Activated naive CD4-positive, alpha-beta T cell treated with anti-CD3 and anti-CD28 coated beads for 36 hours (primary cell): ENCODE measurements at regions of chr13 and their contacts with region 1.

Region 1: GRCh38 chr13:45119991-45120864 is at the start of gene GTF2F2:
- DNase-seq: peak; percentile 88
- H3K4me3 Mint-ChIP-seq: no peak within 1 kb of the TSS
- H3K27ac Mint-ChIP-seq: no peak within 1 kb of the TSS
- H3K4me1 Mint-ChIP-seq: peaks cover 9% of the 10 kb centered on the region
- H3K27me3 Mint-ChIP-seq: no peaks in the 10 kb centered on the region
- total RNA-seq, gene GTF2F2: 21.3 to 22.4 TPM

Region 2: DNA sequence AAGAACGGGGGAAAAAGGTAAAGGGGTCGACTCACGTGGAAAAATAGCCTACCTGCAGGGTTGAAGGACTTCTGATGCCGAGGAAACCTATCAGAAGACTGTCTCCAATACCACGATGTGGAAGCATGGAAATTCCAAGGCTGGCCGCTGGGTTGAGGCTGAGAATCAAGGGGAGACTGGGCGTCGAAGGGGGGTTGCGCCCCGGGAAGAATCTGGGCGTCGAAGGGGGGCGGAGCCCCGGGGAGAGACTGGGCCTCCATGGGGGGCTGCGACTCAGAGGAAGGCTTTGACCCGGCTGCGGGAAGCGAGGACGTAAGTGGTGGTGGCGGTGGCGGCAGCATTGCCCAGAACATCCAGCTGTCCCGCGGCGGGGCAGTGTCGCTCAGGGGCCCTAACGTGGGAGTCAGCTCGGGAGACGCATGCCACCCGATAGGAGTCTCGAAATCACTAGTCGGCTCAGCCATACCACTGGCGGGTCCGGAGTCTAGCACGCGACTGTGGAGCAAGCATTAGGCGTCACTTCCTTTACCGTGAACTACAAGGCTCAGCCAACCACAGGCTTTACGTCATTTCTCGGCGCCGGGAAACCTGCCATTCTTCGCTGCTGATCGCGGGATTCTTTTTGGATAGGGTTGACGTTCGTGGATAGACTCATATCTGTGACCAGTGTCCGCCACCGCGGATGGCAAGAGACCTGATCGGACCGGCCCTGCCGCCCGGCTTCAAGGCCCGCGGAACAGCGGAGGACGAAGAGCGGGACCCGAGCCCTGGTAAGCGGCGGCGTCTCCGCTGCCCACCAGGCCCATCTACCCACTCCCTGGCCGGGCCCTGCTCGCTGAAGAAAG is 131.0 kb before region 1 on chr13 and contains the starts of genes GPALPP1 and NUFIP1:
- CTCF ChIA-PET with region 1: no interaction called
- intact Hi-C with region 1: loop called (anchors 1 kb)
- DNase-seq: peak; percentile 98
- H3K4me3 Mint-ChIP-seq: peak within 1 kb of the TSS; percentile 98
- H3K27ac Mint-ChIP-seq: peak within 1 kb of the TSS; percentile 88
- H3K4me1 Mint-ChIP-seq: peaks cover 60% of the 10 kb centered on the region
- H3K27me3 Mint-ChIP-seq: no peaks in the 10 kb centered on the region
- total RNA-seq, gene GPALPP1: 25.0 to 26.9 TPM
- total RNA-seq, gene NUFIP1: 7.2 to 8.9 TPM

Region 3: DNA sequence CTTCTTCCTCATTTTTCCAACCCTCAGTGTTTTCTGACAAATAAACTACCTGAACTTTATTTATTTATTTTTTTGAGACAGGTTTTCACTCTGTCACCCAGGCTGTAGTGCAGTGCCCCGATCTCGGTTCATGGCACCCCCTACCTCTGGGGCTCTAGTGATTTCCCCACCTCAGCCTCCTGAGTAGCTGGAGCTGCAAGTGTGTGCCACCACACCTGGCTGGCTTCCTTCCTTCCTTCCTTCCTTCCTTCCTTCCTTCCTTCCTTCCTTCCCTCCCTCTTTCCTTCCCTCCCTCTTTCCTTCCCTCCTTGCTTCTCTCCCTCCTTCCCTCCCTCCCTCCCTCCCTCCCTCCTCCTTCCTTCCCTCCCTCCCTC is 48.3 kb after region 1 on chr13:
- CTCF ChIA-PET with region 1: no interaction called
- intact Hi-C with region 1: no loop called
- DNase-seq: no peak
- H3K4me3 Mint-ChIP-seq: no peak overlapping the region
- H3K27ac Mint-ChIP-seq: no peak overlapping the region
- H3K4me1 Mint-ChIP-seq: peaks cover 7% of the 10 kb centered on the region
- H3K27me3 Mint-ChIP-seq: no peaks in the 10 kb centered on the region

Region 4: GRCh38 chr13:45206340-45206739 is 86.1 kb after region 1 on chr13:
- CTCF ChIA-PET with region 1: interaction called, 3 read pairs
- intact Hi-C with region 1: loop called (anchors 1 kb)
- DNase-seq: peak; percentile 33
- H3K4me3 Mint-ChIP-seq: no peak overlapping the region
- H3K27ac Mint-ChIP-seq: peak overlapping the region; percentile 37
- H3K4me1 Mint-ChIP-seq: peaks cover 31% of the 10 kb centered on the region
- H3K27me3 Mint-ChIP-seq: no peaks in the 10 kb centered on the region

Region 5: GRCh38 chr13:45297456-45298205 is 177.4 kb after region 1 on chr13:
- CTCF ChIA-PET with region 1: no interaction called
- intact Hi-C with region 1: loop called (anchors 5 kb)
- DNase-seq: peak; percentile 49
- H3K4me3 Mint-ChIP-seq: no peak overlapping the region
- H3K27ac Mint-ChIP-seq: peak overlapping the region; percentile 84
- H3K4me1 Mint-ChIP-seq: peaks cover 39% of the 10 kb centered on the region
- H3K27me3 Mint-ChIP-seq: peaks cover 2% of the 10 kb centered on the region

Region 6: DNA sequence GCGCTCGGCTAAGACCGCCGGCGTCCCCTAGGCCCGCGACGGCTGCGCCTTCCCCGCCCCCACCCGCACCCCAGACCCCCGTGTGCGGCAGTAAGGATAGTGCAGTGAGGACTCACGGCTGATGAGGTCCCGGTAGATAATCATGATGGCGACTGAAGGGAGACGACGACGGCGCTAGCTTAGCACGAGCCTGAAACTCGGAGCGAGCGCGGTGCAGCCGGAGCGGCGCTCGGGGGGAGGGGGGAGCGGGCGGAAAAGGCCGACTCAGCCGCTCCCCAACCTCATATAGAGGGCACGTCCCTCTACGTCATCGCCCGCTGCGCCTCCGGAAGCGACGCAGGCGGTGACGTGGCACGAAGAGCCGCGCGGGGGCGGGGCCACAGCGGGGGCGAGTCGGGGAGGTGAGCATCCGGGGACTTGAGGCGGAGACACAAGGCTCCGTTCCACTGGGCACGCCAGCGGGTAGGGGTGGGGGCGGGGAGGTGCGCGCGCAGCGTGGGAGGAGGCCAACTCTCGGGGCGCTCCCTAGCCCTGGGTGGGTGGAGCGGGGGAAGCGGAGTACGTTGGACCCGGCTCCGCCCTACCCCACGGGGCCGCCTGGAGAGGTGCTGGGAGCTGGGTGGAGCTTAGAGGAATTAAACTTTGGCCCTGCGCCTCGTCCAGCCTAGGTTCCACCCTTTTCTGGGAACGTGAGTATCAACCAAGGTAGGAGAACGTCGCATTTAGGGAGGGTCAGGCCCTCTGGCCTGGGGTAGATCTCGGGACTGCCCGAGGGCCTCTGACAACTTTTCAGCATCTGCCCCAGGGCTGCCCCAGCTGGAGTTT is 220.9 kb after region 1 on chr13 and contains the start of gene TPT1:
- CTCF ChIA-PET with region 1: no interaction called
- intact Hi-C with region 1: loop called (anchors 1 kb)
- DNase-seq: peak; percentile 100
- H3K4me3 Mint-ChIP-seq: peak within 1 kb of the TSS; percentile 91
- H3K27ac Mint-ChIP-seq: peak within 1 kb of the TSS; percentile 99
- H3K4me1 Mint-ChIP-seq: peaks cover 43% of the 10 kb centered on the region
- H3K27me3 Mint-ChIP-seq: no peaks in the 10 kb centered on the region
- total RNA-seq, gene TPT1: 3,331 to 3,631 TPM

Region 7: GRCh38 chr13:45417790-45418534 is 297.7 kb after region 1 on chr13 and contains the start of gene SLC25A30:
- CTCF ChIA-PET with region 1: no interaction called
- intact Hi-C with region 1: no loop called
- DNase-seq: peak; percentile 89
- H3K4me3 Mint-ChIP-seq: peak within 1 kb of the TSS; percentile 94
- H3K27ac Mint-ChIP-seq: peak within 1 kb of the TSS; percentile 92
- H3K4me1 Mint-ChIP-seq: peaks cover 24% of the 10 kb centered on the region
- H3K27me3 Mint-ChIP-seq: no peaks in the 10 kb centered on the region
- total RNA-seq, gene SLC25A30: 13.6 to 15.1 TPM